CD4-positive, alpha-beta T cell (primary cell): ENCODE measurements at regions of chr22 and their contacts with region 1.

Region 1: DNA sequence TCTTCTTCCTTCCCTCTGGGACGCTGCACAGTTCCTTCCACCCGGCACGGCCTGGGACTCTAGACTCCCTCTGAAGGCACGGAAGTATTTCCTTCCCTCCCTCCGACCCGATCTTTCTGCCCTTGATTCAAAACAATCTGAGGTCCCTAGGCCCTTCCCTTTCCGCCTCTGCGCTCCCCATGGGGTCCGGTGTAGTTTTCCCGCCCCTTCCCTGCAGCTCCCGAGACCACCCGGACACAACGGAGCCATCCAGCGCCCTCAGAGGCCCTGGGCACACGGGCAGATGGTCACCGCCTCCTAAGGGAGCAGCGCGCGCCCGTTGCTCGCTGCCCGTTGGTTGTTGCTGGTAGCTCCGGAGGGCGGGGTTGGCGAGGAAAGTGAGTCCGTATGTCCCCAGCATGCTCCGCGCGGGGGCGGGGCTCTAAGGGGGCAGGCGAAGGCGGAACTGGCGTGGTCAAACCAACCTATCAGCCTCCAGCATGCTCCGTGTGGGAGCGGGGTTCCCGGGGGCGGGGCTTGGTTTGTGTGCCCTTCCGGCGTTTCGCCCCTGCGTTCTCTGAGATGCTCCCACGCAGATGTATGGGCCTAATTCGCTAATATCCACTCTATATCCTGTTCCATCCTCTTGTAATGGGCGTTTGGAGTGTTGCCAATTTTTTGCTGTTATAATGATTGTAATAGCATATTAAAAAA is 19.6 kb downstream of the MIF start:
- DNase-seq: peak; percentile 97 to 100 (median 99)
- ATAC-seq: peak; percentile 99
- H3K4me3 ChIP-seq: peak overlapping the region; percentile 85
- H3K4me3 Mint-ChIP-seq: peak overlapping the region; percentile 88
- H3K27ac ChIP-seq: peak overlapping the region; percentile 81 to 89
- H3K27ac Mint-ChIP-seq: peak overlapping the region; percentile 85
- H3K4me1 ChIP-seq: peaks cover 11% of the 10 kb centered on the region
- H3K4me1 Mint-ChIP-seq: peaks cover 17% of the 10 kb centered on the region
- H3K27me3 ChIP-seq: no peaks in the 10 kb centered on the region
- H3K27me3 Mint-ChIP-seq: no peaks in the 10 kb centered on the region
- CTCF ChIP-seq: no peak

Region 2: GRCh38 chr22:23069502-23070357 is 844.1 kb before region 1 on chr22:
- CTCF ChIA-PET with region 1: no interaction called
- POLR2A ChIA-PET with region 1: no interaction called
- intact Hi-C with region 1: loop called in 1 of 2 experiments (anchors 5 kb)
- DNase-seq: peak; percentile 78 to 96 (median 88)
- ATAC-seq: peak; percentile 97
- H3K4me3 ChIP-seq: peak overlapping the region; percentile 59
- H3K4me3 Mint-ChIP-seq: peak overlapping the region; percentile 92
- H3K27ac ChIP-seq: no peak overlapping the region
- H3K27ac Mint-ChIP-seq: peak overlapping the region; percentile 74
- H3K4me1 ChIP-seq: peaks cover 22% of the 10 kb centered on the region
- H3K4me1 Mint-ChIP-seq: peaks cover 13% of the 10 kb centered on the region
- H3K27me3 ChIP-seq: peaks cover 0 to 6% of the 10 kb centered on the region in 2 experiments
- H3K27me3 Mint-ChIP-seq: peaks cover 17% of the 10 kb centered on the region
- CTCF ChIP-seq: no peak

Region 3: GRCh38 chr22:23841736-23842445 is 71.9 kb before region 1 on chr22:
- CTCF ChIA-PET with region 1: no interaction called
- POLR2A ChIA-PET with region 1: no interaction called
- intact Hi-C with region 1: no loop called
- DNase-seq: no peak
- ATAC-seq: no peak
- H3K4me3 ChIP-seq: no peak overlapping the region
- H3K4me3 Mint-ChIP-seq: no peak overlapping the region
- H3K27ac ChIP-seq: no peak overlapping the region
- H3K27ac Mint-ChIP-seq: no peak overlapping the region
- H3K4me1 ChIP-seq: peaks cover 25% of the 10 kb centered on the region
- H3K4me1 Mint-ChIP-seq: peaks cover 15% of the 10 kb centered on the region
- H3K27me3 ChIP-seq: no peaks in the 10 kb centered on the region
- H3K27me3 Mint-ChIP-seq: no peaks in the 10 kb centered on the region
- CTCF ChIP-seq: no peak

Region 4: DNA sequence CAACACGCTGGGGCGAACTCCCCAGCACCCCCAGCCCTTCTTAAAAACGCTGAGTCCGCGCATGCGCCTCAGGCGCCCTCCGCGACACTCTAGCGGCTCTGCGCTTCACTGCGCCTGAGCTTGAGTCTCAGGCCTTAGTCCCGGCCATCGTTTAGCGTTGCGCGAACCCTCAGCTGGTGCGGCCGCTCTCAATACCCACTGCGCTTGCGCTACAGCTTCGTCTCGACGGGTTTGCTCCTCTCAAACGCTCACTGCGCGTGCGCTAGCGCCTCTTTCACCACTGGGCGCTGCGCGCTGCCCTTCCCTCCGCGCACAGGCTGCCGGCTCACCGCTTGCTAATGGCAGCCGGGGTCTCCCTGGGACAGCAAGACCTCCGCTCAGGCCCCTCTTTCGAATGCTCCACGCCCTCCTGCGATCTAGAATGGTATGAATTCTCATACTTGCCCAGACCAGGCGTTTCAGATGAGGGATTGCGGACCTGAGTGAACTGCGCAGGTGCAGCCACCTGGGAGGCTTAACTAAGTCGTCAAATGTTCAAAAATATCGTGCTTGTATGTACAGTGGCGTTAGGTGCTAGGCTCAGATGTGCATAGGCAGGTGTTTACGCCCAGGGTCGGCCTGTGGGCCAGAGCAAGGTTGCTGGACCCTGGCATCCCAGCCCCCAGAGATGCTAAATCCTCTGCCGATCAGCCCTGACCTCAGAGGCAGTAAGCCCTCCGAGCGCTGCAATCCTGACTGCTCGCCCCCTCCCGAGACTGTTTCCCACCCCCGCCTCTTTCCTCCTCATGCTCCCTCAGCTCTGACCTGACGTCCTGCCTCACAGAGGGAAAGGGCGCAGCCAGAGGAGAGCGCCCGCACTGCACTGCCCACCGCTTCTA is 56.0 kb before region 1 on chr22 and contains the start of gene SLC2A11:
- CTCF ChIA-PET with region 1: interaction called, 3 read pairs
- POLR2A ChIA-PET with region 1: interaction called, 18 read pairs
- intact Hi-C with region 1: no loop called
- DNase-seq: peak; percentile 85 to 99 (median 92)
- ATAC-seq: peak; percentile 93
- H3K4me3 ChIP-seq: peak within 1 kb of the TSS; percentile 87
- H3K4me3 Mint-ChIP-seq: peak within 1 kb of the TSS; percentile 97
- H3K27ac ChIP-seq: peak within 1 kb of the TSS; percentile 56 to 61
- H3K27ac Mint-ChIP-seq: peak within 1 kb of the TSS; percentile 82
- H3K4me1 ChIP-seq: peaks cover 25% of the 10 kb centered on the region
- H3K4me1 Mint-ChIP-seq: peaks cover 20% of the 10 kb centered on the region
- H3K27me3 ChIP-seq: no peaks in the 10 kb centered on the region
- H3K27me3 Mint-ChIP-seq: no peaks in the 10 kb centered on the region
- CTCF ChIP-seq: no peak
- total RNA-seq, gene SLC2A11: 9.9 to 11.5 TPM

Region 5: GRCh38 chr22:23878219-23878618 is 35.6 kb before region 1 on chr22:
- CTCF ChIA-PET with region 1: no interaction called
- POLR2A ChIA-PET with region 1: no interaction called
- intact Hi-C with region 1: no loop called
- DNase-seq: no peak
- ATAC-seq: no peak
- H3K4me3 ChIP-seq: no peak overlapping the region
- H3K4me3 Mint-ChIP-seq: no peak overlapping the region
- H3K27ac ChIP-seq: no peak overlapping the region
- H3K27ac Mint-ChIP-seq: no peak overlapping the region
- H3K4me1 ChIP-seq: no peaks in the 10 kb centered on the region
- H3K4me1 Mint-ChIP-seq: no peaks in the 10 kb centered on the region
- H3K27me3 ChIP-seq: no peaks in the 10 kb centered on the region
- H3K27me3 Mint-ChIP-seq: no peaks in the 10 kb centered on the region
- CTCF ChIP-seq: no peak

Region 6: DNA sequence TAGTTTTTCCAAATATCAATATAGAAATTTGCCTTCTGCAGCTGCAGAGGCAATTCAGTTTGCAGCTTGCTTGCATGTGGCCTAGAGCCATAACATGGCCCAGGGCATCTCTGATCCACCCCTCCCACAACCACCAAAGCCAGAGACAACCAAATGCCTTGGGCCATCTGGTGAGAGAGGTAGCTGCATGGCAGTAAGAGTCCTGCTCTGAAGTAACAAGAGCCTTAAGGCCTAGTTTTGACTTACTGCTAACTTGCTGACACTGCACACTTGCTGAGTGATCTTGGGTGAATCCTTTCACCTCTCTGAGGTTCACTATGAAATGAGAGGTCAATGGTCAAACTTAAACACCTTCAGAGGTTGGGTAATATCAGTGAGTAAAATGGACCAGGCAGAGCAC is 351.9 kb after region 1 on chr22:
- CTCF ChIA-PET with region 1: no interaction called
- POLR2A ChIA-PET with region 1: no interaction called
- intact Hi-C with region 1: loop called in 1 of 2 experiments (anchors 5 kb)
- DNase-seq: no peak
- ATAC-seq: no peak
- H3K4me3 ChIP-seq: no peak overlapping the region
- H3K4me3 Mint-ChIP-seq: no peak overlapping the region
- H3K27ac ChIP-seq: no peak overlapping the region
- H3K27ac Mint-ChIP-seq: no peak overlapping the region
- H3K4me1 ChIP-seq: peaks cover 3% of the 10 kb centered on the region
- H3K4me1 Mint-ChIP-seq: peaks cover 5% of the 10 kb centered on the region
- H3K27me3 ChIP-seq: no peaks in the 10 kb centered on the region
- H3K27me3 Mint-ChIP-seq: no peaks in the 10 kb centered on the region
- CTCF ChIP-seq: no peak

Region 7: GRCh38 chr22:24555157-24556039 is 641.6 kb after region 1 on chr22 and contains the start of gene SNRPD3:
- CTCF ChIA-PET with region 1: no interaction called
- POLR2A ChIA-PET with region 1: interaction called, 3 read pairs
- intact Hi-C with region 1: loop called in 1 of 2 experiments (anchors 10 kb)
- DNase-seq: peak; percentile 99 to 100 (median 100)
- ATAC-seq: peak; percentile 83
- H3K4me3 ChIP-seq: peak within 1 kb of the TSS; percentile 78
- H3K4me3 Mint-ChIP-seq: peak within 1 kb of the TSS; percentile 97
- H3K27ac ChIP-seq: peak within 1 kb of the TSS; percentile 97 to 98
- H3K27ac Mint-ChIP-seq: peak within 1 kb of the TSS; percentile 89
- H3K4me1 ChIP-seq: peaks cover 52% of the 10 kb centered on the region
- H3K4me1 Mint-ChIP-seq: peaks cover 82% of the 10 kb centered on the region
- H3K27me3 ChIP-seq: no peaks in the 10 kb centered on the region
- H3K27me3 Mint-ChIP-seq: no peaks in the 10 kb centered on the region
- CTCF ChIP-seq: no peak
- total RNA-seq, gene SNRPD3: 31.0 to 31.5 TPM